ENCODE measurements at regions of chr9 and their contacts with region 1.

Region 1: DNA sequence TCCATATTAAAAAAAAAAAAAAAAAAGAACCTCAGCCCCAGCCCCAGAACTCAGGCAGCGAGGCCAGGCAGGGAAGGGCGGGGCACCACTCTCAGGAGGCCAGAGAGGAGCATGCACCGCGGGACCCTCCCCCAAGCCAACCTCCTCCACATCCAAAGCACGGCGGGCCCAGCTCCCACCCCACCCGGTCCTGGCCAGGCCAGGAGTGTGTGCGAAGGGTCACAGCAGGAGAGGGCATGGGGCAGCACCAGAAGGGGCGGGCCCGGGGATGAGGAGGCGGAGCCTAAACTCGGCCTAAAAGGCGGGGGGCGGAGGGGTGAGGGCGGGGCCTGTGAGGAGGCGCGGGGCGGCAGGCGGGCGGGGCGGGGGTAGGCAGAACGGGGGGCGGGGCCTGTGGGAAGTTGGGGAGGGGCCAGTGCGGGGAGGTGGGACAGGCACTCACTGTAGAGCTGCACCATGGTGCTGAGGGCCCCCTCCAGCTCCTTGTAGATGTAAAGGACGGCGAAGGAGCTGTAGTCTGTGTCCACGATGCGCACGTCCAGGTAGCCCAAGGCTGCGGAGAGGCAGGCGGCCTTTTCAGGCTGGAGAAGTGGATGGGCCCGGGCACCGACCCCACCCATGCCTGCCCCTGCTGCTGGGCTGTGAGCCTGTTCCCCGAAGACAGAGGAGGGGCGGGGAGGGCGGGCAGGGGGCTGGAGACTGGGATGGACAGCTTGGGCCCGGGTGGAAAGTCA is 1.2 kb downstream of the LCN15 start:
- DNase-seq: no peak
- H3K4me3 ChIP-seq: no peak overlapping the region
- H3K27me3 ChIP-seq: peaks cover 6% of the 10 kb centered on the region
- CTCF ChIP-seq: no peak

Region 2: GRCh38 chr9:136605988-136606660 is 157.0 kb before region 1 on chr9:
- CTCF ChIA-PET with region 1: no interaction called
- POLR2A ChIA-PET with region 1: no interaction called
- DNase-seq: no peak
- H3K4me3 ChIP-seq: no peak overlapping the region
- H3K27me3 ChIP-seq: peaks cover 5% of the 10 kb centered on the region
- CTCF ChIP-seq: no peak

Region 3: DNA sequence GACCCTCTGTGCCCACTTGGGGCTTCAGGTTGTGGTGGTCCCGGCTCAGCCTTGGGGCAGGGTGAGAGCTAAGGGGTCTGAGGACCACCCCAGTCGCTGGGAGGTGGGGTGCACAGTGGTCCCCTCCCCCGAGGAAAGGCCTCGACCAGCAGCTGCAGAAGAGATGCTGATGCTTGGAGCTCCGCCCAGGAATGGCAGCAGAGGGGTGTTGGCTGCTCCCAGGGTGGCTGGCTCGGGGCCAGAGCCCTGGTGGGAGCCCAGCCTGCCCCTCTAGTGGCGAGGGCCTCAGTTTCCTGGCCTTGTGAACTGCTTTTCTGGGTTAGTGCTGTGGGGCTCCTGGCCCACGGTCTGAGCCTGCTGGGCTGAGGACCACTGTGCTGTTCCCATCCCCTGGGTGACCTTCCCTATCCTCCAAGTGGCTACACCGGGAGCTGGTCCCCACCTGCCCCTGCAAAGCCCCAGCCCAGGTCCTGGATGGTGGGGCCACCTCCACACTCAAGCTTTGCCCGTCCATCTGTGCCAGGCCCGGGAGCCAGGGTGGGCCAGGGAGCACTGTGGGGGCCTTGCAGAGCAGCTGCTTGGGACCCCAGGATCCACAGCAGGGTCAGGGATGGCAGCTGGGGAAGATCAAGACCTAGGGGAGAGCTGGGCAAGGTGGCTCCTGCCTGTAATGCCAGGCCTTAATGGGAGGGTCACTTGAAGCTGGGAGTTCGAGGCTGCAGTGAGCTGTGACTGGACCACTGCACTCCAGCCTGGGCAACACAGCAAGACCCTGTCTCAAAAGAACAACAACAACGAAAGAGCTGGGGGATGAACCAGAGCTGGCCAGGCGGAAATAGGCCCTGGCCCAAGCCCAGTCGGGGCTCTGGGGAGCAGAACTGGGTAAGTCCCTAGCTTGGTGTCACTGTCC is 49.3 kb before region 1 on chr9:
- CTCF ChIA-PET with region 1: no interaction called
- POLR2A ChIA-PET with region 1: no interaction called
- DNase-seq: no peak
- H3K4me3 ChIP-seq: no peak overlapping the region
- H3K27me3 ChIP-seq: peaks cover 6% of the 10 kb centered on the region; the same call in 1 of the 2 replicates
- CTCF ChIP-seq: no peak

Region 4: DNA sequence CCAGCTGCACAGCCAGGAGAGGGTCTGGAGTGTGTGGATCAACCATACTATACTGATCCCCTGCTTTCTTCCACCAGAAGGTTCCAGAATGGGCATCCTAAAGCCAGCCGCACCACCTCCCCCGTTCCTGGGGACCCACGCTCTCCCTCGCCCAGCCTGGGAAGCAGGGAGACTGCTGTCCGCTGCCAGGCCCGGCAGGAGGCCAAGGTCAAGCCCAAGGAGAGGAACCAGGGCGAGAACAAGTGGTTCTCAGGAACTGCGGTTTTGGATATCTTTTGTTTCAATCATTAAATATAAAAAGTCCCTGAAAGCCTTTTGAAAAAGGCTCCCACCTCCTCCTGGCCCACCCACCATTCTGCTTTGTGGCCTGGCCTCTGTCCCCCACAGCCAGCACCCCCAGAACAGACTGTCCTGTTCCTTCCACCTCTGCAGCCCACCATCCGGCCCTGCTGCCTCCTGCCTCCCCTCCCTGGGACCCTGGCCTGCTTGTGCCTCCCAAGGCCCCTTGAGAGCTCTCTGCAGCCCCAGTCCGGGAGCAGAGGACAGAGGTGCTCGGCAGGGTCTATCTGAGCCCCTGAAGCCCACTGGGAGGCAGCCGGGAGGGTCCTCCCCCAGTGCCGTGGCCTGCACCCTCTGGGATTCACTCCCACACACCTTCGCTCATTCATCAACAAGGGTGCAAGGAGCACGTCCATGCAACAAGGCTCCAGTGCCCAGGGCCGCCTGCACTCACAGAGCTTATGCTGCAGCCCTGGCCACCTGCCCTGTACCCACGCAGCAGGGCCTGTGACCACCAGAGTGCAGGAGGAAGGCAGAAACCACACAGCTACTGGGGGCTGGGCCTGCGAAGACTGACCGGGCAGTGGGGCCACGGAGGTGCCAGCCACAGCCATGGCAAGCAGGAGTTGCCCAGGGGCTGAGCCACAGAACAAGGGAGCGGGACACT is 14.1 kb before region 1 on chr9:
- CTCF ChIA-PET with region 1: interaction called, 13 read pairs
- POLR2A ChIA-PET with region 1: no interaction called
- DNase-seq: no peak
- H3K4me3 ChIP-seq: no peak overlapping the region
- H3K27me3 ChIP-seq: peaks cover 6% of the 10 kb centered on the region
- CTCF ChIP-seq: no peak

Region 5: GRCh38 chr9:136779808-136780207 is 16.7 kb after region 1 on chr9:
- CTCF ChIA-PET with region 1: interaction called, 20 read pairs
- POLR2A ChIA-PET with region 1: no interaction called
- DNase-seq: no peak
- H3K4me3 ChIP-seq: no peak overlapping the region
- H3K27me3 ChIP-seq: peaks cover 11% of the 10 kb centered on the region
- CTCF ChIP-seq: 0 out of 2 replicates have a peak, but pooled peaks have one; percentile 8

Region 6: GRCh38 chr9:136910901-136911245 is 147.8 kb after region 1 on chr9:
- CTCF ChIA-PET with region 1: no interaction called
- POLR2A ChIA-PET with region 1: no interaction called
- DNase-seq: no peak
- H3K4me3 ChIP-seq: no peak overlapping the region
- H3K27me3 ChIP-seq: no peaks in the 10 kb centered on the region
- CTCF ChIP-seq: no peak

Measured in BJ (cell line).